AG04449 (cell line): ENCODE measurements at regions of chr1 and their contacts with region 1.

Region 1: GRCh38 chr1:204806943-204807687 is 63.5 kb upstream of the NFASC start:
- DNase-seq: no peak
- H3K4me3 ChIP-seq: peak overlapping the region; percentile 59
- CTCF ChIP-seq: peak; percentile 99

Region 2: GRCh38 chr1:204323887-204324286 is 483.2 kb before region 1 on chr1:
- CTCF ChIA-PET with region 1: no interaction called
- POLR2A ChIA-PET with region 1: no interaction called
- DNase-seq: no peak
- H3K4me3 ChIP-seq: no peak overlapping the region
- CTCF ChIP-seq: no peak

Region 3: GRCh38 chr1:204446370-204447111 is 360.6 kb before region 1 on chr1:
- CTCF ChIA-PET with region 1: interaction called, 12 read pairs
- POLR2A ChIA-PET with region 1: no interaction called
- DNase-seq: no peak
- H3K4me3 ChIP-seq: no peak overlapping the region
- CTCF ChIP-seq: peak; percentile 85

Region 4: DNA sequence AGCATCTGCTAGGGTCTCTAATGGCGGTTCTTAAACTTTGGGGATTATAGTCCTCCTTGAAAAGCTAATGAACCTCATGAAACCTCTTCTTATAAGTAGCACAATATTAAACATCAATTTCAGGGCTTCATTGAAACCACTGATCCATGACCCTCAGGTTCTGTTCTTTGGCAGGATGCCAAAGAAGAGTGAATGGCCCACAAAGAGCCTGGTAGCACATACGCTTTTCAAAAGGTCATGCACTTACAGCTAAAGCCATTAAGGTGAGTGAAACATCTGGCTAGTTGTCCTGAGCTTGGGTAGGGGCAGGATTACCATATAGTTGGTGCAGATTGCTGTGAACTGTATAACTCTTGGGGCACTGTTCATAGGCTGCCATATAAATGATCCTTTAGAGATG is 248.6 kb before region 1 on chr1:
- CTCF ChIA-PET with region 1: interaction called, 673 read pairs
- POLR2A ChIA-PET with region 1: no interaction called
- DNase-seq: no peak
- H3K4me3 ChIP-seq: no peak overlapping the region
- CTCF ChIP-seq: no peak

Region 5: DNA sequence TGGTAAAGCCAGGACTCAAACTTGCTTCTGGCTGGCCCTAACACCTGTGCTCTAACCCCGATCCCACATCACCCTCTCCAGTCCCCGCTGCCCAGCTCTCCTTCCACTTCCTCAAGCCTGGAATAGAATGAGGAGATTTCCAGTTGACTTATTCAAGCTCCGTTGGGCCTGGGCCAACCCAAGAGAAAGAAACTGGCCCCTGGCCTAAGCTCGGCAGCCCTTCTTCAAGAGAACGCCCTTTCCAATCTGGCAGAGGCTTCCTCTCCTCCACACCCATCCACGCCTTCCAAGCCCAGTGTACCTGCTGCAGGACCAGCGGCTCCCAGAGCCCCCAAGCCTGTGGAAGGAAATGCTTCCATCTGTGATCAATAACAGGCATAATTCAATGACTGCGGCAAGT is 173.4 kb before region 1 on chr1:
- CTCF ChIA-PET with region 1: no interaction called
- POLR2A ChIA-PET with region 1: no interaction called
- DNase-seq: no peak
- H3K4me3 ChIP-seq: no peak overlapping the region
- CTCF ChIP-seq: no peak

Region 6: DNA sequence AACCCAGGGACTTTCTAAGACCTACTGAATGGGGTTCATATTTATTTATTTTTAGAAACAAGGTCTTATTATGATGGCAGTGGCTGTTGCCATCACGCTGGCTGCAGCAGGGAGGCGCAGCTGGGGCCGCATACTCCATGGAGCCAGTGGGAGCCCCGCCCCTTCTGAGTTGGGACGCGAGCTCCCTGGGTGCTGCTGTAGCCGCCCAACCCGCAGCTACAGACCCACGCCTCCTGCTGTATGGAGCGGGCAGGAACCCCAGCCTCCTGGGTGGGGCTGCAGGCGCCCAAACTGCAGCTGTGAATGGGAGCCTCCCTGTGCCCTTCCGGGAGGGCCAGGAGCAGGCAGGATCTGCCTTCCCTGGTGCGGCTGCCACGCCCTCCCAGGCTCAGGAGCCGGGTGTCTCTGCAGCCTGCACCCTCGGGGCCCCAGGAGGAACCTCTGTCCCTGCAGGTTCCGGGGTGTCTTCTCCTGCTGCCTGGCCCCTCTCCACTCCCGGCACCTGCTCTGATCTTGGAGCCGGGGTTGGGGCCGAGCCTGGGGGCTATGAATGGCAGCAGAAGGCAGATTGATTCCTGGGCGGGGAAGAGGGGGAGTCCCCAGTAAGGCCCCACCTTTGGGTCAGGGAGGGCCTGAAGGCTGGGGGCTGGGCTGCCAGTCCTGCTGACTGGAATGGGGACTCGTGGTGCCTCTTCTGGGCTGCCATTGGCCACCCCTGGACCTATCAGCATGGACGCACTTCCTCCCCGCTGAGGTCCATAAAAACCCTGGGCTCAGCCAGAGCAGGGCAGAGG is 55.0 kb before region 1 on chr1:
- CTCF ChIA-PET with region 1: interaction called, 13 read pairs
- POLR2A ChIA-PET with region 1: no interaction called
- DNase-seq: no peak
- H3K4me3 ChIP-seq: no peak overlapping the region
- CTCF ChIP-seq: no peak

Region 7: DNA sequence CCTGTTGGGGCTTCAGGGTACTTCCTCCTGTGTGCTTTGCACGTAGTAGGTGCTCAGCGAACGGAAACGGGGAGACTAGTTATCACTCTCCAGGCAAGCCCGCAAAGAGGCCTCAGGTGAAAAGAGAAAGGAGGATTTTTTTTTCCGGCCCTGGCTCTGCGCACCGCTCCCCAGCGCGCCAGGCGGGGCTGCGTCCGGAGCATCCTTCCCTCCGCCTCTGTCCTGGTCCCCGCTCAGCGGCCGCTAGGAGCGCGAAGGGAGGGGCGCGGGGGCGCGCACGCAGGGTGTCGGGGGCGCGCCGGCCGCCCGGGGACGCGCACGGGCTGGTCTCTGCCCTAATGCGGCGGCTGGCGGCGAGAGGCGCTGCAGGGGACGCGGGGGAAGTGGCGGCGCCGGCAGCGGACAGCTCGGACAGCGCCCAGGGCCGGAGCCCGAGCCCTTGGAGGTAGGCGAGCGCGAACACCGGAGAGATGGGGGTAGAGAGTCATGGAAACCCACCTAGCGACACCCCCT is 21.3 kb after region 1 on chr1:
- CTCF ChIA-PET with region 1: interaction called, 235 read pairs
- POLR2A ChIA-PET with region 1: no interaction called
- DNase-seq: no peak
- H3K4me3 ChIP-seq: peak overlapping the region; percentile 68
- CTCF ChIP-seq: peak; percentile 37

Region 8: DNA sequence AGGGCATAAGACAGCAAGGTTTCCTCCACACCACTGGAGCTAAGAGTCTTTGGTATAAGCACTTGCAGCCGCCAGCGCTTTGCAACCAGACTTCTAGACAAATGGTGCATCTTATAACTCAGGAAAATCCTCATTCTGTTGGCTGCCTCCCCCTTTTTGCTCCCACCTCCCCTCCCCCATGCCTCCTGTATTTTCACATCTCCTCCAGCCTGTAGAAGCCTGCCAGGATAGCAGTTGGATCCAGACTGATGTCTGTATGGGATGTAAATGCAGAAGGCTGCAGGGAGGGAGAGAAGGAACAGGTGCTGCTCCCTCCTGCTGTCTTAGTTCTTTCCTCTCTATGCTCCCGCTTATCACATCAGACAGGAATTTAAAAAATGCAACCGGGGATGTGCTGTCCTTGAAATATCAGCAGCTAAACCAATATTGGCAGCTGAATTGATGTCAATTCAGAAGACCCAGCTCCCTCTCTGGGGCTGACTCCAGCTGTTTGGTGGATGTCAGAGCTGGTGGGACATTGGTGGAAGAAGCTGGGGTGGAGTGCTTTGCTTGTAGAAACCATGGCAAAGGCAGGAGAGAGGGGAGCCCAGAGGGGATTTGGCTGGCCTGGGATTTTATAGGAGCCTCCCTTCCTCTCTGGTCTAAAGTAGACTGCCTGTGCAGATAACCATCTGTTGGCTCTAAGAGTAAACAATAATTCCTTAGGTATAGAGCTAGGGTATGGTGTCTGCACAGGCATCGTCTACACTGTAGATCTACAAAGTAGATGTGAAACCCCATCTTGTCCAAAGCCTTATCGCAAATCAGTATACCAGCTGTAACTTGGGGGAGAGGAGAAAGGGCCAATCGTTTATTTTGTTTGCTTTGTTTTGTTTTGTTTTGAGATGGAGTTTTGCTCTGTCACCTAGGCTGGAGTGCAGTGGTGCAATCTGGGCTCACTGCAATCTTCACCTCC is 117.2 kb after region 1 on chr1:
- CTCF ChIA-PET with region 1: interaction called, 35 read pairs
- POLR2A ChIA-PET with region 1: no interaction called
- DNase-seq: no peak
- H3K4me3 ChIP-seq: no peak overlapping the region
- CTCF ChIP-seq: no peak

Region 9: GRCh38 chr1:205003393-205004131 is 196.4 kb after region 1 on chr1:
- CTCF ChIA-PET with region 1: interaction called, 11 read pairs
- POLR2A ChIA-PET with region 1: no interaction called
- DNase-seq: no peak
- H3K4me3 ChIP-seq: no peak overlapping the region
- CTCF ChIP-seq: no peak